ENCODE measurements at regions of chr17 and their contacts with region 1.

Region 1: DNA sequence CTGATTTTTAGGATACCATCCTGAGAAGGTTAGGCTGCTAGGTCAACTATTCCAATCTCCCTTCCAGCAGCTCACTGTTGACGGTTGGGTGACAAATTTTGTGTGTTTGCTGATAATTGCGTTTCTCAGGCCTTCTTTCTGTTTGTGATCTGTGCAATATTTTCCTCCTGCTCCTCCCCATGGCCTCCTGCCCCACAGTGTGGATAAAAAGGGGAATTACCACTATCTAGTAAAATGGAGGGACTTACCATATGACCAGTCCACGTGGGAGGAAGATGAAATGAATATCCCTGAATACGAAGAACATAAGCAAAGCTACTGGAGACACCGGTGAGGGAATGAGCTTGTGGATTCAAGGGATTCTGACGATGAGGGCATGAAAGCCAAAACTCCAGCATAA is 9.2 kb downstream of the CHD3 start:
- DNase-seq: peak in 1 of 3 donors; percentile 51
- ATAC-seq: peak; percentile 85
- H3K4me3 ChIP-seq: no peak overlapping the region
- H3K4me1 ChIP-seq: no peaks in the 10 kb centered on the region
- CTCF ChIP-seq: no peak

Region 2: GRCh38 chr17:7862692-7863437 is 34.9 kb before region 1 on chr17:
- intact Hi-C with region 1: loop called in 1 of 2 experiments (anchors 5 kb)
- DNase-seq: peak in 1 of 3 donors; percentile 76
- ATAC-seq: no peak
- H3K4me3 ChIP-seq: no peak overlapping the region
- H3K4me1 ChIP-seq: peaks cover 24% of the 10 kb centered on the region
- CTCF ChIP-seq: peak; percentile 39

Measured in mucosa of descending colon (tissue), 3 donors.